ENCODE measurements at regions of chr2 and their contacts with region 1.

Region 1: GRCh38 chr2:241629762-241630435 is 7.1 kb downstream of the THAP4 start:
- DNase-seq: no peak
- ATAC-seq: no peak; the same call in 1 of the 2 replicates
- H3K4me3 ChIP-seq: no peak overlapping the region
- H3K27ac ChIP-seq: no peak overlapping the region
- H3K4me1 ChIP-seq: no peaks in the 10 kb centered on the region
- H3K27me3 ChIP-seq: no peaks in the 10 kb centered on the region
- CTCF ChIP-seq: no peak

Region 2: GRCh38 chr2:241617431-241618154 is 12.3 kb before region 1 on chr2:
- CTCF ChIA-PET with region 1: no interaction called
- POLR2A ChIA-PET with region 1: interaction called, 18 read pairs
- intact Hi-C with region 1: no loop called
- DNase-seq: no peak
- ATAC-seq: 0 out of 2 replicates have a peak, but pooled peaks have one; percentile 17
- H3K4me3 ChIP-seq: no peak overlapping the region
- H3K27ac ChIP-seq: no peak overlapping the region
- H3K4me1 ChIP-seq: no peaks in the 10 kb centered on the region
- H3K27me3 ChIP-seq: no peaks in the 10 kb centered on the region
- CTCF ChIP-seq: no peak

Region 3: DNA sequence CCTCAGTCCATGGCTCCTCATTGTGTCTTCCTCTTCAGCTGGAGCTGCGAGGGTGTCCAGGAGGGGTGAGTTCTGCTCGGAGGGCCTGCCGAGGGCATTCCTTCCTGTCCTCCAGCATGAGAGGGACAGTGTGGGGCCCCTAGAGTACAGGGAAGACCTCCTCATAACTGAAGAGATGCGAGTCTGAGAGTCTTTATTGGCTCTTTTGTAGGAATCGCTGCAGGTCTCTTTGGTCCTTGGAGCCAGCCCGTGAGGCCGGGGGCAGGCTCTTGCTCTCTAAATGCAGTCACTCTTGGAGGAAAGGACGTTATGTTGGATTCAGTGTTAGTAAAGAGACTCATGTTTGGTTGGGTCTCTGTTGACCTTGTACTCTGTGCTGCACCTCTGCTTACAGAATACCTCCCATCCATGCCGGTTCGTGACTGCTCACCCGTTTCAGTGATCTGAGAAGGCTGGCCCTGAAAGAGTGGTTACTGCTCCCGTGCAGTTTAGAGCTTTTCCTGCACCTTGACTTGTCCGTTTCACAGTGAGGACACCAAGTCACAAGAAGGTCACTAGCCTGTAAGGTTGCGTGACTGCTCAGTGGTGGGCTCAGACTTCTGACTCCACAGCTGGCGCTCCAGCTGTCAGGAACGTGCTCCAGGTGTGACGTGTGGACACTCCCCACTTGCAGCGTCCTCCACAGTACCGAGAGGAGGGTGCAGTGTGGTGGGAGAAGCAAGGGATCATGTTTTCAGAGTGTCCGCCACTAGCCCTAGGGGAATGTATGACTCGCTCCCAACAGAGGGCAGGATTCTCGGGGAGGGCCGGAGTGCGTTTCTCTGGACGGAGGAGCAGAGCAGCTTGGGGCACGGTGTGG is 15.4 kb after region 1 on chr2:
- CTCF ChIA-PET with region 1: no interaction called
- POLR2A ChIA-PET with region 1: no interaction called
- intact Hi-C with region 1: no loop called
- DNase-seq: no peak
- ATAC-seq: no peak
- H3K4me3 ChIP-seq: no peak overlapping the region
- H3K27ac ChIP-seq: no peak overlapping the region
- H3K4me1 ChIP-seq: no peaks in the 10 kb centered on the region
- H3K27me3 ChIP-seq: no peaks in the 10 kb centered on the region
- CTCF ChIP-seq: no peak

Measured in PC-3 (cell line).